Activated CD4-positive, alpha-beta T cell treated with anti-CD3 and anti-CD28 coated beads, Interleukin-2, amount 10 ng/mL, durations not matched to agents 24 days and 14 days (primary cell): ENCODE measurements at regions of chr1 and their contacts with region 1.

Region 1: GRCh38 chr1:11719313-11720032 is 16.5 kb upstream of the AGTRAP start:
- DNase-seq: peak; percentile 95
- H3K4me3 Mint-ChIP-seq: peak overlapping the region; percentile 81
- H3K27ac Mint-ChIP-seq: peak overlapping the region; percentile 89
- H3K4me1 Mint-ChIP-seq: peaks cover 10% of the 10 kb centered on the region
- H3K27me3 Mint-ChIP-seq: peaks cover 7% of the 10 kb centered on the region

Region 2: GRCh38 chr1:11478571-11479374 is 240.7 kb before region 1 on chr1 and contains the start of gene DISP3:
- intact Hi-C with region 1: loop called (anchors 10 kb)
- DNase-seq: peak; percentile 91
- H3K4me3 Mint-ChIP-seq: peak within 1 kb of the TSS; percentile 64
- H3K27ac Mint-ChIP-seq: no peak within 1 kb of the TSS
- H3K4me1 Mint-ChIP-seq: peaks cover 6% of the 10 kb centered on the region
- H3K27me3 Mint-ChIP-seq: peaks cover 31% of the 10 kb centered on the region
- total RNA-seq, gene DISP3: 0.23 and 0.31 TPM in 2 replicates

Region 3: DNA sequence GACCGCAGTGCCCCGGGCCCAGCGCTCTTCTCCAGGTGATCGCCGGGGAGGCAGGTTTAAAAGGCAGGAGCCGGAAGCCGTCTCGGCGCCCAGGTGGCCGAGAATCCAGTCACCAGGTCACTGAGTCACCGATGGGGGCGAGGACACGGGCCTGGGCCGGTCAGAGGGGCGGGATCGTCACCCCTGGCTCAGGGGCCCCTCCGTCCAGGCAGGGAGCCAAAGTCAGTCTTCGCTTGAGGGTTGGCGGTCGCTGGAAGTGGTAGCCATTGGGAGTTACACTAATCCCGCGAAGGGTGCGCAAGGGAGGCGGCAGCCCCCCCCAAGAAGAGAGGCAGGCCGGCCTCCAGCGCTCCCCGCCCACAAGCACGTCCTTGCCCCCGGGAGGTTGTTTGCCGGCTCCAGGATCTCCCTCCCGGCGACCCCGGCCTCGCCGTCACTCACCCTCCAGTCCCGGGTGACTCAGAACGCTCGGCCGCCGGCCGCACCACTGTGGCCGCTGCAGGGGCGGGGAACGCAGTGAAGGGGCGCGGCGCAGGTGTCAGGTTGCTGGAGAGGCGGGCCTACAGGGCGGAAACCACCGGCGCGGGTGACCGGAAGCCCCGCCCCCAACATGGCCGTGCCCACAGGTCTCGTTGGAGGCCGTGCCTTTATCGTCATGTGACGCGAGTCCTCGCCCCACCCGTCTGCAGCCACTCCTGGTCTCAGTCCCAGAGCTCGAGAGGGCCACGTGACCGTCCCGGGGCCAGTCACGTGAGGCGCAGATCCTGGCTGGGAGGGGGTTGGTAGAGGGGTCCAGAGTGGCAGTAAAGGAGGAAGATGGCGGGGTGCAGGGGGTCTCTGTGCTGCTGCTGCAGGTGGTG is 86.2 kb after region 1 on chr1 and contains the starts of genes CLCN6 and MTHFR:
- intact Hi-C with region 1: no loop called
- DNase-seq: peak; percentile 100
- H3K4me3 Mint-ChIP-seq: peak within 1 kb of the TSS; percentile 99
- H3K27ac Mint-ChIP-seq: peak within 1 kb of the TSS; percentile 95
- H3K4me1 Mint-ChIP-seq: peaks cover 53% of the 10 kb centered on the region
- H3K27me3 Mint-ChIP-seq: no peaks in the 10 kb centered on the region
- total RNA-seq, gene CLCN6: 12.7 and 15.2 TPM in 2 replicates
- total RNA-seq, gene MTHFR: 15.6 and 18.4 TPM in 2 replicates